Activated T-helper 1 cell treated with anti-CD3 and anti-CD28 coated beads, Interleukin-12 subunit alpha, Interleukin-12 subunit beta, Interleukin-2, Interleukin-4 antibody, amounts not matched to agents 30 ng/mL and 10 ng/mL and 1 ng/mL, durations not matched to agents 14 hours and 24 hours and 36 hours (primary cell): ENCODE measurements at regions of chr12 and their contacts with region 1.

Region 1: DNA sequence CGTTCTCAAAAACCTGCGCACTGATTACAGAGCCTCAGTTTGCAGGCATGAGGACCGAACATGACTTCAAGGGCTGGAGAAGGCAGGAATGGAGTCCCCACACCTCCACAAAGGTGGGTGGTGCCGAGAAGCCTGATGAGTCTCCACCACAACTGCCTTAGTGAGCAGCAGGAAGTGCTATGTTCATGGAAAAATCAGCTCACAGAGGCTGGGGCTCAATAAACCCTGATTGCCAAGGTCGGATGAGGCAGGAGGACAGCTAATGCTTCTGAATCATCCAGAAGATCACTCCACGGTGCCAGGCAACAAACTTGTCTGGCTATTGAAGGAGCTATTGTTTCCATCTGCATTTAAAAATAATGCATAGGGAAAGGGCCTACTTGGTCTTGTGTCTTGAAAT is 31.1 kb downstream of the APPL2 start:
- DNase-seq: no peak
- H3K4me3 Mint-ChIP-seq: no peak overlapping the region
- H3K27ac Mint-ChIP-seq: peak overlapping the region; percentile 49
- H3K4me1 Mint-ChIP-seq: peaks cover 14% of the 10 kb centered on the region
- H3K27me3 Mint-ChIP-seq: no peaks in the 10 kb centered on the region

Region 2: GRCh38 chr12:105226219-105226618 is 21.3 kb after region 1 on chr12:
- intact Hi-C with region 1: loop called (anchors 2 kb)
- DNase-seq: peak; percentile 24
- H3K4me3 Mint-ChIP-seq: peak overlapping the region; percentile 43
- H3K27ac Mint-ChIP-seq: no peak overlapping the region
- H3K4me1 Mint-ChIP-seq: peaks cover 71% of the 10 kb centered on the region
- H3K27me3 Mint-ChIP-seq: no peaks in the 10 kb centered on the region

Region 3: DNA sequence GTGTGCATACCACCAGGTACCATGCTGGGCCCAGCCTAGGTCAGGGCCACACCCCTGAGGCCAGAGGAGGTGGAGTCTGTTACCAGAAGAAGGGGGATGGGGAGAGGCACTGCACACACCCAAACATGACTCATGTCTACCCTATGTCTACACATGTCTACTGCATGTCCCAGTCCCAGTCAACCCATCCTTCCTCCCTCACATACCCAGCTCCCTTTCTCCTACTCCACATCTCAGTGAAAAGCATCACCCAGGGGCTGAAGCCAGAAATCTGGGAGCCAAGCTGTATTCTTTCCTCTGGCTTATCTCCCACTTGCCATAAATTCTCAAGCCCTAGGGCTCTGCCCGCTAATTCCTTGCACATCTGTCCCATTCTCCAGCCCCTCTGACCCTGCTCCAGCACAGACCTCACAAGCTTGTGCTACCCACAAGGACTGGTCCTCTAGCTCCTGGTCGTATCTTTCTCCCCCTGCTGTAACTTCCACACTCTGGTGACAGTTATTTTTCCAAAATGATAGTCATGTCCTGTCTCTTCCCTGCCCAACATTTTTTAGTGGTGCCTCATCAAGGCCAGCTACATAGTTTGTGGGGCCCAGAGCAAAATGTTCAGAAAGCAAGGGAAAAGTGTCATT is 49.1 kb after region 1 on chr12:
- intact Hi-C with region 1: no loop called
- DNase-seq: no peak
- H3K4me3 Mint-ChIP-seq: no peak overlapping the region
- H3K27ac Mint-ChIP-seq: no peak overlapping the region
- H3K4me1 Mint-ChIP-seq: peaks cover 14% of the 10 kb centered on the region
- H3K27me3 Mint-ChIP-seq: peaks cover 7% of the 10 kb centered on the region